ENCODE measurements at regions of chr11 and their contacts with region 1.

Region 1: DNA sequence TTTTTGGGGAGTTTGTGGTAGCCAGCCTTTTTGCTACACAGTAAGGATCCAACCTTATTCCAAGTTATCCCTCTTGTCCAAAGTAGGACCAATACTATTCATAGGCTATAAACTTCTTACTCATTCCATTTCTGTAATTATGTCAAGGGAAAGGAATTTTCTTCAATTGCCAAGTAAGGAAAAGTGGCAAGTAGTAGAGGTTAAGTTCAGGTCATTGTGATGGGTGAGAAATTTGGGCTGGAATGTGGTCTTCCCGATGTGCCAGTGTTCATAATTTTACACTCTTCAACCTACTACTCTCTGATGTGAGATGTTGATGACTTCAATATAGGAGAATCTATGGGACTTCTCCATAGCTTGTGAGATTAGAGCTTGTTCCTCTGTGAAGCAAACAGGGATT is 648.8 kb downstream of the METTL15 start:
- DNase-seq: peak; percentile 33 to 49
- H3K4me3 ChIP-seq: peak overlapping the region; percentile 15; the same call in 1 of the 2 replicates
- H3K27ac ChIP-seq: peak overlapping the region; percentile 37; the same call in 1 of the 2 replicates
- H3K4me1 ChIP-seq: peaks cover 28% of the 10 kb centered on the region
- H3K27me3 ChIP-seq: no peaks in the 10 kb centered on the region
- CTCF ChIP-seq: no peak

Region 2: GRCh38 chr11:28107748-28108618 is 649.0 kb before region 1 on chr11 and contains the starts of genes KIF18A and METTL15:
- CTCF ChIA-PET with region 1: no interaction called
- POLR2A ChIA-PET with region 1: no interaction called
- intact Hi-C with region 1: loop called (anchors 2 kb)
- DNase-seq: peak; percentile 97 to 99
- H3K4me3 ChIP-seq: peak within 1 kb of the TSS; percentile 93
- H3K27ac ChIP-seq: peak within 1 kb of the TSS; percentile 61
- H3K4me1 ChIP-seq: peaks cover 48% of the 10 kb centered on the region
- H3K27me3 ChIP-seq: no peaks in the 10 kb centered on the region
- CTCF ChIP-seq: no peak
- total RNA-seq, gene KIF18A: 22.9 and 31.1 TPM in 2 replicates
- total RNA-seq, gene METTL15: 17.9 and 19.9 TPM in 2 replicates

Region 3: GRCh38 chr11:28606930-28607329 is 150.0 kb before region 1 on chr11:
- CTCF ChIA-PET with region 1: no interaction called
- POLR2A ChIA-PET with region 1: no interaction called
- intact Hi-C with region 1: loop called (anchors 5 kb)
- DNase-seq: peak in 1 of 2 experiments; percentile 34
- H3K4me3 ChIP-seq: no peak overlapping the region
- H3K27ac ChIP-seq: no peak overlapping the region
- H3K4me1 ChIP-seq: no peaks in the 10 kb centered on the region
- H3K27me3 ChIP-seq: no peaks in the 10 kb centered on the region
- CTCF ChIP-seq: no peak

Region 4: DNA sequence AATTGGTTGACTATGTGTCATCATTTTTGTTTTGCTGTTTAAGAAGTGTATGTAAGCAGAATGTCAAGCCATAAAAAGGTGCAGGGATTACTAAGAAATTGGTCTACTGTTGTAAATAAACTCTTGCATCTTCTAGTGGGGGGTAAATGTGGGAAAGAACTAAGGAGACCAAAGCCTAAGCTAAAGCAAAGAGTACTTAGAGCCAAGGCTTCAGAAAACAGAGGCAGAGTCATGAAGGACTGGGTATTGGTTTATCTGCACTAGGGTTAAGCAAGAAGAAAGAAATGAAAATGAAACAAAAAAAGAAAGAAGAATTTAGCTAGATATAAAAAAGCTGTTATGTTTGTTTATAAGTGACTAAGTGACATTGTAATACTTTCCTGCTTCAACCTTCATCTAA is 20.7 kb before region 1 on chr11:
- CTCF ChIA-PET with region 1: interaction called, 10 read pairs
- POLR2A ChIA-PET with region 1: interaction called, 14 read pairs
- intact Hi-C with region 1: no loop called
- DNase-seq: no peak
- H3K4me3 ChIP-seq: no peak overlapping the region
- H3K27ac ChIP-seq: no peak overlapping the region
- H3K4me1 ChIP-seq: peaks cover 9% of the 10 kb centered on the region
- H3K27me3 ChIP-seq: no peaks in the 10 kb centered on the region
- CTCF ChIP-seq: no peak

Region 5: GRCh38 chr11:28777126-28777525 is 20.1 kb after region 1 on chr11:
- CTCF ChIA-PET with region 1: no interaction called
- POLR2A ChIA-PET with region 1: no interaction called
- intact Hi-C with region 1: no loop called
- DNase-seq: no peak
- H3K4me3 ChIP-seq: no peak overlapping the region
- H3K27ac ChIP-seq: no peak overlapping the region
- H3K4me1 ChIP-seq: no peaks in the 10 kb centered on the region
- H3K27me3 ChIP-seq: no peaks in the 10 kb centered on the region
- CTCF ChIP-seq: no peak

Region 6: DNA sequence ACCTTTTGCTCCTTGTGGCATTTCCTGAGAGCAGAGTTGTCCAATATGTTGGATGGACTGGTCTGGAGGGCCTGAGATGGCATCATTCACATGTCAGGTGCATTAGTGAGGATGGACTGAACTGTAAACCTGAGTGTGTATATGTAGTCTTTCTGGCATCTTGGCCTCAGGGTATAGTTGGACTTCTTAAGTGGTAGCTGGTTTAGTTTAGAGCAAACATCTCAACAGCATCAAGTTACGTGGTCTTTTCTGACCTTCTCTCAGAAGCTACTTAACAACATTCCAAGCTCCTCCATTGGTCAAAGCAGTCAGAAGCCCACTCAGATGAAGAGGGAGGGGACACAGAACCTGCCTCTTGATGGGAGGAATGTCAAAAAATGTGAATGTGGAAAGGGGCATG is 181.1 kb after region 1 on chr11:
- CTCF ChIA-PET with region 1: no interaction called
- POLR2A ChIA-PET with region 1: no interaction called
- intact Hi-C with region 1: loop called (anchors 1 kb)
- DNase-seq: peak; percentile 35 to 46
- H3K4me3 ChIP-seq: no peak overlapping the region
- H3K27ac ChIP-seq: no peak overlapping the region
- H3K4me1 ChIP-seq: peaks cover 6% of the 10 kb centered on the region
- H3K27me3 ChIP-seq: no peaks in the 10 kb centered on the region
- CTCF ChIP-seq: no peak

Region 7: GRCh38 chr11:29159552-29160465 is 402.8 kb after region 1 on chr11:
- CTCF ChIA-PET with region 1: no interaction called
- POLR2A ChIA-PET with region 1: no interaction called
- intact Hi-C with region 1: loop called (anchors 2 kb)
- DNase-seq: peak in 1 of 2 experiments; percentile 48
- H3K4me3 ChIP-seq: no peak overlapping the region
- H3K27ac ChIP-seq: no peak overlapping the region
- H3K4me1 ChIP-seq: no peaks in the 10 kb centered on the region
- H3K27me3 ChIP-seq: no peaks in the 10 kb centered on the region
- CTCF ChIP-seq: peak; percentile 79

Region 8: DNA sequence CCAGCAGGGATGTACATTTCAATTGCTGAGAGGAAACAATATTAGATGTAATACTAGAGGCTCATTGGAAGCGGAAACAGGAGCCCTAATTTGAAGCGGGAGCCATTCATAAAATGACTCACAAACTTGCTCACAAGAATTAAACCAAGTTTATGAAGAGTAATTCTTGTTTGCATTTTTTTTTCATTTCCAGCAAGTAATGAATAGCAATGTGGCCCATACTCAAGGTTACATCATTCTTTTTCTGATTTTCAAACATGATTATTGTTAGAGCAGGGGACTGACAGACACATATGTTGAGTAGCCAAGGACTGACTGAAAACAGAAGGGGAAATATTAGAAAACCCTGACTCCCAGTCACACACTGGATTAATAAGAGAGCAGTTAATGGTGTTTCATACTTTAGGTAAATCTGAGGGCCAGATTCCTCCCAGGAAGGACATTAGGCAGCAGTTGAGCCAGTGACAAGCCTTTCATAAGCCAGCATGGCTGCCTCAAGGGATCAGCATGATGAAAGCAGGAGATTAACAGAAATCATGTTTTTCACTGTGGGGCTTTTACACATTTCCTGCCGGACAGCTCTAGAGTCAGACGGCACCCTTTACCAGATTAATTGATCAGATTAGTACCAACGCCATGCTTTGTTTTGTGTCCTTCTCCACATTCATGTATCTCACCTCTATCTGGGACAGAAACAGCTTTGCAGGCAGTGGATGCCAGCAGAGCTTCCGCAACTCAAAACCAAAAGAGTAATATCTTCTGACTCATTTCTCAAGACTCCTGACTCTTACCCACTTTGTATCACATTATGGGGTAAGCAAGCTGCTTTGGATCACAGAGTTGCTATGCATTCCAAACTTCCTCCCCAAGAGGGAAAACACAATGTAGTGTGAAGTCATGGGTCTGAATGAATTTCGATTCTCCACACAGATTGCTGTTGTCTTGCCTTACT is 428.2 kb after region 1 on chr11:
- CTCF ChIA-PET with region 1: no interaction called
- POLR2A ChIA-PET with region 1: no interaction called
- intact Hi-C with region 1: loop called (anchors 1 kb)
- DNase-seq: peak in 1 of 2 experiments; percentile 43
- H3K4me3 ChIP-seq: no peak overlapping the region
- H3K27ac ChIP-seq: no peak overlapping the region
- H3K4me1 ChIP-seq: no peaks in the 10 kb centered on the region
- H3K27me3 ChIP-seq: no peaks in the 10 kb centered on the region
- CTCF ChIP-seq: no peak

Measured in PC-9 (cell line).